K562 (cell line): ENCODE measurements at regions of chr1 and their contacts with region 1.

Region 1: GRCh38 chr1:35603468-35603867 is 30.4 kb downstream of the TFAP2E start:
- DNase-seq: no peak
- ATAC-seq: no peak
- H3K4me3 ChIP-seq: no peak overlapping the region
- H3K27ac ChIP-seq: no peak overlapping the region
- H3K4me1 ChIP-seq: no peaks in the 10 kb centered on the region
- H3K27me3 ChIP-seq: no peaks in the 10 kb centered on the region
- CTCF ChIP-seq: no peak
- EP300 ChIP-seq: no peak
- POLR2A ChIP-seq: no peak
- RAD21 ChIP-seq: no peak

Region 2: DNA sequence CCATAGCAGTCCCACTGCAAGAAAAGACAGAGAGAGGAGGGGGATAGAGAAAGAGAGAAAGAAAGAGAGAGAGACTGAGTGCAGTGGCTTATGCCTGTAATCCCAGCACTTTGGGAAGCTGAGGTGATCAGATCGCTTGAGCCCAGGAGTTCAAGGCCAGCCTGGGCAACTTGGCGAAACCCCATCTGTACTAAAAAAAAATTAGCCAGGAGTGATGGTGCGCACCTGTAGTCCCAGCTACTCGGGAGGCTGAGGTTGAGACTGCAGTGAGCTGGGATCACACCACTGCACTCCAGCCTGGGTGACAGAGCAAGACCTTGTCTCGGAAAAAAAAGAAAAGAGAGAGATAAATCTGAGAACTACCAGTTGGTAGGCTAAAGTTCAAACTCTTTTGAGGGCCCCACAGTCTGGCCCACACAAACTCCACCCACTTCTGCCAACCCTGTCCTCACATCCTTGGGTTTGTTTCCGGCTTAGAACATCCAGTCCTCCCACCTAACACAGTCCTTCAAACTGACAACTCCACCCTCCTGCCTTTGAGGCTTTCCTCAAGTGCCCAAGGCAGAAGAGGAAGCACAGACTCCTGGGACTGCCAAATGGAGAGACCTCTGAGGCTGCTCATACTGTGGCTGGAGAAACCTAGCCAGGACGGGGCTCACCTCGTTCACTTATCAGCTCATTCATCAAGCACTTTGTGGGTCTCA is 10.3 kb before region 1 on chr1:
- CTCF ChIA-PET with region 1: no interaction called
- POLR2A ChIA-PET with region 1: interaction called, 17 read pairs
- in situ Hi-C with region 1: no loop called
- intact Hi-C with region 1: no loop called
- DNase-seq: no peak
- ATAC-seq: peak; percentile 37
- H3K4me3 ChIP-seq: no peak overlapping the region
- H3K27ac ChIP-seq: no peak overlapping the region
- H3K4me1 ChIP-seq: peaks cover 4 to 9% of the 10 kb centered on the region in 2 experiments; a peak in 3 of 5 replicates
- H3K27me3 ChIP-seq: no peaks in the 10 kb centered on the region
- CTCF ChIP-seq: no peak
- EP300 ChIP-seq: no peak
- POLR2A ChIP-seq: no peak
- RAD21 ChIP-seq: no peak

Region 3: DNA sequence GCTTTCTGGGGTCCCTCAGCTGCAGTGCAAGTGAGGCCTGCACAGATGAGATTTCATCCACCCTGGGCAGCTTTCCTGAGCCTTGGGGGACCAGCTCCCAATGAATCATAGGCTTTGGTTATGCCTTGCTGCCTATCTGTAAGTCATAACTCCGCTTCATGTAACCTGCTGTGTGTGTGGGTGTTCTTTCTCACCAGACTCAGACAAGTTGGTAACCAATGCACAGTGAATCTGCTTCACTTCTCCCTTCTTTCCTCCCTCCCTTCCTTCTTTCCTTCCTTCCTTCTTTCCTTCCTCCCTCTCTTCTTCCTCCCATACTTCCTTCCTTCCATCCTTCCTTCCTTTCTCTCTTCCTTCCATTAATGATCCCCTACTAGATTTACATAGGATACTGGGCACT is 72.3 kb after region 1 on chr1:
- CTCF ChIA-PET with region 1: no interaction called
- POLR2A ChIA-PET with region 1: no interaction called
- in situ Hi-C with region 1: no loop called
- intact Hi-C with region 1: no loop called
- DNase-seq: no peak
- ATAC-seq: no peak
- H3K4me3 ChIP-seq: no peak overlapping the region
- H3K27ac ChIP-seq: no peak overlapping the region
- H3K4me1 ChIP-seq: peaks cover 5 to 8% of the 10 kb centered on the region in 2 experiments; a peak in 3 of 5 replicates
- H3K27me3 ChIP-seq: peaks cover 11 to 12% of the 10 kb centered on the region in 2 experiments; a peak in 3 of 5 replicates
- CTCF ChIP-seq: no peak
- EP300 ChIP-seq: no peak
- POLR2A ChIP-seq: no peak
- RAD21 ChIP-seq: no peak

Region 4: GRCh38 chr1:35882945-35883634 is 279.6 kb after region 1 on chr1 and contains the start of gene AGO1:
- CTCF ChIA-PET with region 1: no interaction called
- POLR2A ChIA-PET with region 1: no interaction called
- in situ Hi-C with region 1: no loop called
- intact Hi-C with region 1: no loop called
- DNase-seq: peak; percentile 97 to 99 (median 99)
- ATAC-seq: peak; percentile 79
- H3K4me3 ChIP-seq: peak within 1 kb of the TSS; percentile 64
- H3K27ac ChIP-seq: peak within 1 kb of the TSS; percentile 73
- H3K4me1 ChIP-seq: peaks cover 47 to 72% of the 10 kb centered on the region in 2 experiments
- H3K27me3 ChIP-seq: no peaks in the 10 kb centered on the region
- CTCF ChIP-seq: peak; percentile 95 to 97 (median 97)
- EP300 ChIP-seq: no peak; the same call in 1 of the 2 replicates
- POLR2A ChIP-seq: peak; percentile 51; the same call in 1 of the 2 replicates
- RAD21 ChIP-seq: peak; percentile 56 to 73
- polyA plus RNA-seq, gene AGO1: 7.3 to 13.3 TPM